Sigmoid colon (tissue), 7 donors: ENCODE measurements at regions of chr11 and their contacts with region 1.

Region 1: GRCh38 chr11:111283945-111284481 is 14.3 kb upstream of the POU2AF3 start:
- DNase-seq: no peak
- H3K4me3 ChIP-seq: no peak overlapping the region
- H3K27ac ChIP-seq: no peak overlapping the region
- H3K4me1 ChIP-seq: peaks cover 0 to 29% (median 12%) of the 10 kb centered on the region in 4 donors
- H3K27me3 ChIP-seq: no peaks in the 10 kb centered on the region
- CTCF ChIP-seq: no peak
- EP300 ChIP-seq: no peak
- POLR2A ChIP-seq: no peak

Region 2: DNA sequence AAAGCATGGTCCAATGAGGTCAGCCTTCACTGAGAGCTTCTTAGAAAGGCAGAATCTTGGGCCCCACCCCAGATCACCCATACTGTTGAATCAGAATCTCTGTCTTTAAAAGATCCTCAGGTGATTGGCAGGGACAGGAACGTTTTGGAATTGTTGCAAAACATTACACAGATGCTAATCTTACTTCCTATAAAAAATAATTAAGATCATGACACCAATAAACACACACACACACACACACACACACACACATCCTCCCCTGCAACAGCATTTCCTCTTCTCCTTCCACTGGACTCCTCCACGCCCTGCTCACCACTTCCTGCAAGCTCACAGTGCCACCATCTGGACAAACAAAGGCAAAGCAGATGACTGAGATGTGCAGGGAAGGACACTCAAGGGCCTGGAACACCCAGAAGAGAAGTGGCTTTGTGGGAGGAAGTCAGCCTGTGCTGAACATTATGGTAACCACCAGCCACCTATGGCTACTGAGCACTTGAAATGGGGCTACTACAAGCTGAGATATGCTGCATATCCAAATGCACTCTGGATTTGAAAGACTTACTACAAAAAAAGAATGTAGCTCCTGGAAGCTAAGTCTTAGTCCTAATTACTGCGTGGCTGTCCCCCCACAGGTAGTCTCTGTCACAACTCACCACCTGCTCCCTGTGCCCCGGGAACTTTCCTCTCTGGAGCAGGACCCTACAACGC is 162.5 kb after region 1 on chr11:
- intact Hi-C with region 1: loop called (anchors 1 kb)
- DNase-seq: peak; percentile 90
- H3K4me3 ChIP-seq: no peak overlapping the region
- H3K27ac ChIP-seq: peak overlapping the region in 2 of 4 donors; percentile 22 to 37
- H3K4me1 ChIP-seq: peaks cover 0 to 9% (median 6%) of the 10 kb centered on the region in 4 donors
- H3K27me3 ChIP-seq: no peaks in the 10 kb centered on the region
- CTCF ChIP-seq: peak; percentile 81 to 99 (median 94)
- EP300 ChIP-seq: no peak
- POLR2A ChIP-seq: no peak